GM12878 (cell line): ENCODE measurements at regions of chr4 and their contacts with region 1.

Region 1: GRCh38 chr4:112938461-112939058 is 110.9 kb upstream of the ANK2 start:
- DNase-seq: no peak
- ATAC-seq: peak; percentile 72
- H3K4me3 ChIP-seq: no peak overlapping the region
- H3K27ac ChIP-seq: no peak overlapping the region
- H3K4me1 ChIP-seq: no peaks in the 10 kb centered on the region
- H3K27me3 ChIP-seq: no peaks in the 10 kb centered on the region
- CTCF ChIP-seq: peak; percentile 63 to 71 (median 67)
- EP300 ChIP-seq: no peak
- POLR2A ChIP-seq: no peak
- RAD21 ChIP-seq: peak; percentile 92

Region 2: DNA sequence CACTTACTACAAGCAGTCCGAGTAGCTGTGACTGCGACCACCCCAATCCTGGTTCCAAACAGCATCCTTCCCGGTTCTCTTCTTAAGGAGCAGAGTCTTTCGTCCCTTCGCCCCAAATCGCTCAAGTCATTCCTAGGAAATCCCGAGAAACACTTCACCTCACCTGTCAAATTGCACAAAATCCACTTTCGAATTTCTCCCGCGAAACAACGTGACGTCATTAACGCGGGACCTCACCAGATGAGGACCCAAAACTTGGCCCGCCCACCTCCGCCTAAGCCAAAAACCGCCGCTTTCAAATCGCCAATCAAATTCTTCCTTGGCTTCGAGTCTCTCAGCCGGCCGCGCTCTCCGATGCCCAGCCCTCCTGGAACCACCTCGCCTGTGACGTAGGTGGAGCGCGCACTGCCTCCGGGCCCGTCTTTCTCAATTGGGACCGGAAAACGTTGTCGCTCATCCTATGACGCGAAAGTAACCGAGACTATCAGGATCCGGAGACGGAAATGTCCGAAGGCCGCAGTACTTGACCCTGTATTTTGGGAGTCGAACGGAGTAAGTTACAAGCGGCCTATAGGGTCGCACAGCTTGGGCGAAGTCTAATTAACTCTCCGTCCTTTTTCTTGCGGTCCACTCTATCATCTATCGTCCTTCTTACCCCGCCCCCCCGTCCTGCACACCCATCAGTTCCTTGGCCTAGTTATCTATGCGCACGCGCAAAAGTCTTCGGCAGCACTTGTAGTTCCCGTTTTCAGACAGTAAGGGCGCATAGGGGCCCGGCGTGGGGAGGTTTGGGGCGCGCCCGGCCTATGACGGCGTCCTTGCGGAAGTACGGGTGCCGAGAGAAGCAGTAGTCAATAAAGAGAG is 301.6 kb before region 1 on chr4 and contains the starts of genes LARP7 and ZGRF1:
- CTCF ChIA-PET with region 1: interaction called, 28 read pairs
- POLR2A ChIA-PET with region 1: no interaction called
- RAD21 ChIA-PET with region 1: interaction called, 3 read pairs
- SMC1A ChIA-PET with region 1: interaction called, 6 read pairs
- in situ Hi-C with region 1: loop called (anchors 5 kb)
- intact Hi-C with region 1: loop called (anchors 1 kb)
- DNase-seq: peak; percentile 96
- ATAC-seq: peak; percentile 94
- H3K4me3 ChIP-seq: peak within 1 kb of the TSS; percentile 87
- H3K27ac ChIP-seq: peak within 1 kb of the TSS; percentile 98
- H3K4me1 ChIP-seq: peaks cover 20% of the 10 kb centered on the region
- H3K27me3 ChIP-seq: no peaks in the 10 kb centered on the region
- CTCF ChIP-seq: peak; percentile 86 to 96 (median 95)
- EP300 ChIP-seq: peak in 1 of 2 experiments; percentile 32; a peak in 2 of 4 replicates
- POLR2A ChIP-seq: peak; percentile 77
- RAD21 ChIP-seq: peak; percentile 50
- polyA plus RNA-seq, gene LARP7: 79.0 to 107 TPM
- polyA plus RNA-seq, gene ZGRF1: 8.5 to 9.0 TPM

Region 3: GRCh38 chr4:112817933-112818593 is 120.5 kb before region 1 on chr4:
- CTCF ChIA-PET with region 1: interaction called, 81 read pairs
- POLR2A ChIA-PET with region 1: no interaction called
- RAD21 ChIA-PET with region 1: interaction called, 5 read pairs
- SMC1A ChIA-PET with region 1: interaction called, 56 read pairs
- in situ Hi-C with region 1: no loop called
- intact Hi-C with region 1: no loop called
- DNase-seq: peak; percentile 55
- ATAC-seq: peak; percentile 96
- H3K4me3 ChIP-seq: peak overlapping the region; percentile 80
- H3K27ac ChIP-seq: peak overlapping the region; percentile 54
- H3K4me1 ChIP-seq: no peaks in the 10 kb centered on the region
- H3K27me3 ChIP-seq: no peaks in the 10 kb centered on the region
- CTCF ChIP-seq: peak in 1 of 3 experiments; percentile 32; a peak in 1 of 6 replicates
- EP300 ChIP-seq: 0 out of 4 replicates have a peak, but pooled peaks of 1 of the 2 experiments have one; percentile 6
- POLR2A ChIP-seq: peak; percentile 89
- RAD21 ChIP-seq: no peak; the same call in 1 of the 2 replicates

Region 4: GRCh38 chr4:112860830-112861690 is 77.5 kb before region 1 on chr4:
- CTCF ChIA-PET with region 1: interaction called, 111 read pairs
- POLR2A ChIA-PET with region 1: interaction called, 3 read pairs
- RAD21 ChIA-PET with region 1: interaction called, 6 read pairs
- SMC1A ChIA-PET with region 1: interaction called, 83 read pairs
- in situ Hi-C with region 1: no loop called
- intact Hi-C with region 1: no loop called
- DNase-seq: peak; percentile 7
- ATAC-seq: peak; percentile 73
- H3K4me3 ChIP-seq: no peak overlapping the region
- H3K27ac ChIP-seq: no peak overlapping the region
- H3K4me1 ChIP-seq: no peaks in the 10 kb centered on the region
- H3K27me3 ChIP-seq: no peaks in the 10 kb centered on the region
- CTCF ChIP-seq: no peak
- EP300 ChIP-seq: no peak
- POLR2A ChIP-seq: no peak
- RAD21 ChIP-seq: no peak

Region 5: GRCh38 chr4:112895811-112896608 is 42.5 kb before region 1 on chr4:
- CTCF ChIA-PET with region 1: interaction called, 9 read pairs
- POLR2A ChIA-PET with region 1: no interaction called
- RAD21 ChIA-PET with region 1: interaction called, 6 read pairs
- SMC1A ChIA-PET with region 1: interaction called, 27 read pairs
- in situ Hi-C with region 1: no loop called
- intact Hi-C with region 1: no loop called
- DNase-seq: peak; percentile 31
- ATAC-seq: peak; percentile 84
- H3K4me3 ChIP-seq: no peak overlapping the region
- H3K27ac ChIP-seq: no peak overlapping the region
- H3K4me1 ChIP-seq: no peaks in the 10 kb centered on the region
- H3K27me3 ChIP-seq: no peaks in the 10 kb centered on the region
- CTCF ChIP-seq: no peak
- EP300 ChIP-seq: no peak
- POLR2A ChIP-seq: no peak
- RAD21 ChIP-seq: no peak

Region 6: GRCh38 chr4:112916868-112917267 is 21.7 kb before region 1 on chr4:
- CTCF ChIA-PET with region 1: interaction called, 77 read pairs
- POLR2A ChIA-PET with region 1: interaction called, 4 read pairs
- RAD21 ChIA-PET with region 1: interaction called, 3 read pairs
- SMC1A ChIA-PET with region 1: interaction called, 10 read pairs
- in situ Hi-C with region 1: no loop called
- intact Hi-C with region 1: no loop called
- DNase-seq: no peak
- ATAC-seq: no peak
- H3K4me3 ChIP-seq: no peak overlapping the region
- H3K27ac ChIP-seq: no peak overlapping the region
- H3K4me1 ChIP-seq: no peaks in the 10 kb centered on the region
- H3K27me3 ChIP-seq: no peaks in the 10 kb centered on the region
- CTCF ChIP-seq: no peak
- EP300 ChIP-seq: no peak
- POLR2A ChIP-seq: no peak
- RAD21 ChIP-seq: no peak

Region 7: DNA sequence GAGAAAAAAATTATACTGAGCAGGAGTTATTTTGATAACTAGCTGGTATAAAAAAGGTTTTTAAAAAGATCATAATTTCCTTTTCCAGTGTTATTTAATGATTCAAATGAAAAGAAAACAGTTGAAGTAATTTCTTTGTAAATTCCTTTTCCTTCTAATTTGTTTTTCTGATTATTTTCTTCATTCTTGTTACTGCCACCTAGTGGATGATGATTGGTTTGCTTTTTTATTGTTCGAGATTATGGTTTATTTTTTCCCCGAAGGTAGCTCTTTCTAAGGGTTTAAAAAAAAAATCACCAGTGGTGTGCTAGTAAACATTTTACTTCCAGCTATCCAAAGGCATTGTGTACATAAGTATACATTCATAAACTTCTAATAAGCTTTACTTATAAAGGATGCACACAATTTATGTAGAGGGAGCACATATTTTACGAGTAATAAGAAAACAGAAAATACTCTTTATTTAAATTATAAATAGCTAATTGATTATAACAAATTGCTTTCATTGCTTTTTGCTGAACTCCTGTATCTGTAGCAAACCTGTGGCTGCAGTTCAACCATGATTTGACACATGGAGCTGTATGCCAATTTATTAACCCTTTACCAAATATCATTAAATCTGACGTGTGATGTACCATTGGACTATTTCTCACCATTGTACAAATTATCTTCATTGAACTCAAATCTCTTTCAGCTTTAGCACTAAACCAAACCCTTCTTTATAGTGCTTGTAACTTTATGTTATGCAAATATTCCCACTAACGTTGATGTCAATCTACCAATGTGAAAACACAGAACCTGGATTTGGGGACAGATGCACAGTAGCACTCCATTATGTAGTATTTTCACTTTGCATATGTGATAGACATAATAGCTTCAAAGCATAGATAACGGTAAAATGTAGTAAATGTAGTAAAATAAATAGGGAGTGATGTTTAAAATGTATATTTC is 13.1 kb after region 1 on chr4:
- CTCF ChIA-PET with region 1: interaction called, 139 read pairs
- POLR2A ChIA-PET with region 1: interaction called, 3 read pairs
- RAD21 ChIA-PET with region 1: interaction called, 5 read pairs
- SMC1A ChIA-PET with region 1: interaction called, 17 read pairs
- in situ Hi-C with region 1: no loop called
- intact Hi-C with region 1: no loop called
- DNase-seq: no peak
- ATAC-seq: no peak
- H3K4me3 ChIP-seq: no peak overlapping the region
- H3K27ac ChIP-seq: no peak overlapping the region
- H3K4me1 ChIP-seq: no peaks in the 10 kb centered on the region
- H3K27me3 ChIP-seq: no peaks in the 10 kb centered on the region
- CTCF ChIP-seq: peak; percentile 35 to 45 (median 39); a peak in 4 of 6 replicates
- EP300 ChIP-seq: no peak
- POLR2A ChIP-seq: no peak
- RAD21 ChIP-seq: no peak